Heart left ventricle (tissue), 16 donors: ENCODE measurements at regions of chr16 and their contacts with region 1.

Region 1: DNA sequence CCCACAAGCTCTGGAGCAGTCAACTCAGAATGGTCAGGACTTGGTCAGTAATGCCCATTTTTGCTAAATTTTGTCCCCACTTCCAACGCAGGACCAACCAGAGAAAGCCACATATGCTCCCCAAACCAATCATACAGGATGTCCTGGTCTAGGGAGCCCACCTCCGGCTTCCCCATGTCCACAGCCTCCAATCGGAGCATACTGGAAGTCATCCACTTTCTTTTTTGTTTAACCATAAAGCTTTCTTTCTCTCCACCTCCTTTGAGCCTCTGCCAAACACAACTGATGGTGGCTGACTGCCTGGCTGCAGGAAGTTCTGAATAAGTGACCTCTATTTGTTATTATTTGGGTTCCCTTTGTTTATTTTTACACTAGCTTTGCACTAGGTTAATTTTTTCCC is 549.1 kb downstream of the WWOX start:
- DNase-seq: peak in 3 of 5 donors; percentile 30 to 45 (median 38)
- ATAC-seq: peak in 2 of 4 donors; percentile 41 to 47
- H3K4me3 ChIP-seq: no peak overlapping the region
- H3K27ac ChIP-seq: peak overlapping the region in 8 of 12 donors; percentile 24 to 72 (median 50)
- H3K4me1 ChIP-seq: peaks cover 0 to 31% (median 18%) of the 10 kb centered on the region in 12 donors
- H3K27me3 ChIP-seq: no peaks in the 10 kb centered on the region
- CTCF ChIP-seq: no peak
- POLR2A ChIP-seq: no peak

Region 2: DNA sequence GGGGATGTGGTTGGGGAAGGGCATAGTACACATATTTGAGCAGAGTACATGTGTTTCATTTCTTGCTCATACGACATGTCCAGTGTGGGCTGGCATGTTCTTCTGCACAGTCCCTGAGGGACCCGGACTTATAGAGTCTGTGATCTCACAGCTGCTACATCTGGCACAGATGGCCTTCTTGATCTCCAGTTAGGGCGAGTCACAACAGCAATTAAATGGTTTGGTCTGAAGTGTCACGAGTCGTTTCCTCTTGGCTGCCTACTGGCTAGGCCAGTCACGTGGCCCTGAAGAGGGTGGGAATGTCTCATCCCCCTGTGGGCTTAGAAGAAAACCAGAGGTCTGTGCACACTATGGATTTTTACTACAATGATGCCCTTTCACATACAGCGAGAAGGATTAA is 105.5 kb before region 1 on chr16:
- intact Hi-C with region 1: no loop called
- DNase-seq: no peak
- ATAC-seq: peak in 1 of 4 donors; percentile 20
- H3K4me3 ChIP-seq: no peak overlapping the region
- H3K27ac ChIP-seq: no peak overlapping the region
- H3K4me1 ChIP-seq: no peaks in the 10 kb centered on the region
- H3K27me3 ChIP-seq: no peaks in the 10 kb centered on the region
- CTCF ChIP-seq: no peak
- POLR2A ChIP-seq: no peak

Region 3: GRCh38 chr16:78749745-78750268 is 101.3 kb after region 1 on chr16:
- intact Hi-C with region 1: loop called in 1 of 10 experiments (anchors 10 kb)
- DNase-seq: no peak
- ATAC-seq: no peak
- H3K4me3 ChIP-seq: no peak overlapping the region
- H3K27ac ChIP-seq: peak overlapping the region in 1 of 12 donors; percentile 9
- H3K4me1 ChIP-seq: peaks cover 0 to 3% (median 0%) of the 10 kb centered on the region in 12 donors
- H3K27me3 ChIP-seq: no peaks in the 10 kb centered on the region
- CTCF ChIP-seq: no peak
- POLR2A ChIP-seq: no peak